ENCODE measurements at regions of chr1 and their contacts with region 1.

Region 1: DNA sequence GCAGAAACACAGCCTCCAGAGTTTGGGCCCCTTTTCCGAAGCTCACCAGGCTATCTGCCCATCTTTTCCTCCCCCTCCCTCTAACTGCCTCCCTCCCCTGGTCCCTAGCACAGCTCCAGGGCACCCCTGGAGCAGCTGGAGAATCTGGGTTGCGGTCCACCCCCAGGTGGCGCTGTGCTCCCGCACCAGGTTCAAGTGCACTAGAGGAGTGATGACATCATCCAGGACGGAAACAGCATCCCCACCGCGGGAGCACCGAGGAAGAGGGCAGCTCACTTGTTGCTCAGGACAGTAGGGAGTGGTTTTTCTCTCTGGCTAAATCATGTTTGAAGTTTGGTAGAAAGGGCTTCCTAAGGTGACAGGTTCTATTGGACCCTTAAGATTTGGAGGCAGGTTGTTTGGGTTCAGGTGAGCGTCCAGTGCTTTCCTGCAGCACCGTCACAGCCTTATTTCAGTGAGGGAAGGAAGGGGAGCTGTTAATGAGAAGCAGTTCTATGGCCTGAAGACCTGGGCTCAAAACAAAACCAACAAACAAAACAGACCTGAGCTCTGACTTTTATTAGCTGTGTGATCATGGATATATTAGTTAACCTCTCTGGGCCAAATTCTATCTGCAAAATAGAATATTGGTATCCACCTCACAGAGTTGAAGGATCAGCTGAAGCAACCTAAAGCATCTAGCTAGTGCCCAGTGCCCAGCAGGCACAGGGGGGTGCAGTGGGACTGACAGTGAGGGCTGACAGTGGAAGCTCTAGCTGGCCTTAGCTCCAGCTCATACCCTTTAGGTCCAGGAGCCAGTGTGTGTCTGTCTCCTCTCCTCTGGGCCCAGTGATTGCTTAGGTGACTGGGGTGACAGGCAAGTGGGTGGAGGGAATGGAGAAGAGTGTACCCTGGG is 7.5 kb downstream of the SHISA4 start:
- DNase-seq: peak; percentile 92
- H3K4me3 Mint-ChIP-seq: peak overlapping the region; percentile 34
- H3K27ac Mint-ChIP-seq: no peak overlapping the region
- H3K4me1 Mint-ChIP-seq: peaks cover 7% of the 10 kb centered on the region
- H3K27me3 Mint-ChIP-seq: peaks cover 21% of the 10 kb centered on the region

Region 2: GRCh38 chr1:201877877-201878401 is 18.2 kb before region 1 on chr1:
- CTCF ChIA-PET with region 1: interaction called, 55 read pairs
- POLR2A ChIA-PET with region 1: interaction called, 4 read pairs
- intact Hi-C with region 1: no loop called
- DNase-seq: peak; percentile 17
- H3K4me3 Mint-ChIP-seq: no peak overlapping the region
- H3K27ac Mint-ChIP-seq: no peak overlapping the region
- H3K4me1 Mint-ChIP-seq: no peaks in the 10 kb centered on the region
- H3K27me3 Mint-ChIP-seq: no peaks in the 10 kb centered on the region

Region 3: GRCh38 chr1:201946224-201946908 is 50.2 kb after region 1 on chr1 and contains the start of gene LMOD1:
- CTCF ChIA-PET with region 1: interaction called, 23 read pairs
- POLR2A ChIA-PET with region 1: interaction called, 4 read pairs
- intact Hi-C with region 1: no loop called
- DNase-seq: peak; percentile 16
- H3K4me3 Mint-ChIP-seq: no peak within 1 kb of the TSS
- H3K27ac Mint-ChIP-seq: no peak within 1 kb of the TSS
- H3K4me1 Mint-ChIP-seq: peaks cover 8% of the 10 kb centered on the region
- H3K27me3 Mint-ChIP-seq: peaks cover 40% of the 10 kb centered on the region
- total RNA-seq, gene LMOD1: not detected

Region 4: GRCh38 chr1:201970334-201971159 is 74.4 kb after region 1 on chr1:
- CTCF ChIA-PET with region 1: interaction called, 118 read pairs
- POLR2A ChIA-PET with region 1: interaction called, 7 read pairs
- intact Hi-C with region 1: loop called (anchors 1 kb)
- DNase-seq: no peak
- H3K4me3 Mint-ChIP-seq: no peak overlapping the region
- H3K27ac Mint-ChIP-seq: no peak overlapping the region
- H3K4me1 Mint-ChIP-seq: no peaks in the 10 kb centered on the region
- H3K27me3 Mint-ChIP-seq: no peaks in the 10 kb centered on the region

Region 5: DNA sequence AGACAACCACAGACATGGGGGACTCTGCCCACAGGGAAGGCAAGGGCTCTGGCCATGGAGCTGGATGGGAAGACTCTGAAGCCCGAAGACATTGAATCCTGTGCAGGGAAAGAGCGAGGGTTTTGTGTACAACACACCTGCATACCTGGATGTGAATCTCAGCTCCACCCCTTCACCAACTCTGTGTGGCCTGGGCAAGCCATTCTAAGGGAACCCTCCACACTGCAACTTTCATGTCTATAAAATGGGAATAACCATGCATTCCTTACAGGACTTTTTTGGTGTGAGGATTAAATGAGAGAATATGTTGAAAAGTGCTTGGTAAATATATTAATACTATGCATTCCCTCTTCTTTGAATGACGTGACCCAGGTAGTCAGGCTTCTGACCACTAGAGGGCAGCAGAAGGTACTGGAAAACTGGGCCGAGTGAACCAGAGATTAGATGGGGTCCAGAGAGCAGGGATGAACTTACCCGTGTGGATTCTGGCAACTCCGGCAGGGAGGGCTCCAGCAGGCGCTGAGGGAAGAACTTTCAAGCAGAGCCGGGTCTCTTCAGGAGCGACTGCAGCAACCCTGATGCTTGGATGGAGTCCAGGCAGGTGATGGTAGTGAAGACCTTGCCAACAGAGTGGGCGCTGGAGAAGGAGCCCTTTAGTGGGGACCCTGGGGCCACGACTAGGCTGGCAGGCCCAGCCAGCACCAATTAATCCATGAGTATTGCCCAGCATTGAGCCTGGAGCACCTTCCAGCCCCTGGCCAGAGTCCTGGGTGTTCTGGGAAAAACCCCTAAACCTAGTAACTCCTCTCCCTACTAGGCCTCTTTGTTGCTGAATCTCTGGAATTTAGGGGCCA is 113.4 kb after region 1 on chr1:
- CTCF ChIA-PET with region 1: interaction called, 16 read pairs
- POLR2A ChIA-PET with region 1: no interaction called
- intact Hi-C with region 1: no loop called
- DNase-seq: peak; percentile 68
- H3K4me3 Mint-ChIP-seq: no peak overlapping the region
- H3K27ac Mint-ChIP-seq: no peak overlapping the region
- H3K4me1 Mint-ChIP-seq: no peaks in the 10 kb centered on the region
- H3K27me3 Mint-ChIP-seq: no peaks in the 10 kb centered on the region

Region 6: DNA sequence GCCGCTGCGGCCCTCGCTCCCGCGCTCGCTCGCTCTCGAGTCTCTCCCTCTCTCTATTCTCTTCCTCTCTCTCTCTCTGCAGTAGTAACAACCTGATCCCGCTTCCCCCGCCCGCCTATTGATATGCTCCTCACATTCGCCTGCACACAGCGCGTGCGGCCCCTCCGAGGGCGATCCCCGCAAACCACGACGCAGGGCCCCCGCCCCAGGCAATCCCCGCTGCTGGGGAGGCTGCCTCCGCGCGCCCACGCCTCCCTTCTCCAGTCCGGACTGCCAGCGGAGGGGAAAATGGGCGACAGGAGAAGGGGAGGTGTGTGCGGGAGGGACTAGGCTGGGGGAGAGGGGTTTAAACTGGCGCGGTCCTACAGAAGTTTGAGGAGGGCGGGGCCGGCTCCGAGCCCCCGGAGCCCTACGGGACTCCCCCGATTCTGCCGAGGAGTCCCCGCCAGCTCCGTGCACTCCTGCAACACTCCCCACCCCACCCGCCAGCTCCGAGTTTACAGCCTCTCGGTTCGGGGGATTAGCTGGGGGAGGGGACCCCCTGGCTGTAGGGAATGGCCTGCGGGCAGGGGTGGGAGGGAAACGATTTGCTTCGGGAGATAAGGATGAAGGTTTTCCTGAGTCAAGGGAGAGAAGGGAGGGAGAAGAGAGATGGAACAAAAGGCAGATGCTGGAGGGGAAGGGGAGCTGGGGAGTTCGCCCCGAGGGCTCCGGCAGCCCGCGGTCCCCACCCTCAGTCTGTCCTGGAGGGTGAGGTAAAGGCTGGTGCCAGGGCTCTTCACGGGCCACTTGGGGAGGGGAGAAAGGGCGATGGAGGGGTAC is 747.4 kb after region 1 on chr1:
- CTCF ChIA-PET with region 1: no interaction called
- POLR2A ChIA-PET with region 1: no interaction called
- intact Hi-C with region 1: no loop called
- DNase-seq: peak; percentile 35
- H3K4me3 Mint-ChIP-seq: peak overlapping the region; percentile 36
- H3K27ac Mint-ChIP-seq: no peak overlapping the region
- H3K4me1 Mint-ChIP-seq: peaks cover 17% of the 10 kb centered on the region
- H3K27me3 Mint-ChIP-seq: peaks cover 59% of the 10 kb centered on the region